Activated CD8-positive, alpha-beta T cell treated with anti-CD3 and anti-CD28 coated beads, Interleukin-2, amount 10 ng/mL, durations not matched to agents 7 days and 5 days (primary cell): ENCODE measurements at regions of chr21 and their contacts with region 1.

Region 1: GRCh38 chr21:28745131-28746016 is 247.3 kb downstream of the LTN1 start:
- DNase-seq: peak; percentile 82
- ATAC-seq: peak; percentile 86
- H3K4me3 Mint-ChIP-seq: no peak overlapping the region
- H3K27ac Mint-ChIP-seq: no peak overlapping the region
- H3K4me1 Mint-ChIP-seq: no peaks in the 10 kb centered on the region
- H3K27me3 Mint-ChIP-seq: no peaks in the 10 kb centered on the region

Region 2: GRCh38 chr21:26850108-26850643 is 1895.2 kb before region 1 on chr21:
- CTCF ChIA-PET with region 1: interaction called, 10 read pairs
- POLR2A ChIA-PET with region 1: no interaction called
- DNase-seq: no peak
- ATAC-seq: no peak
- H3K4me3 Mint-ChIP-seq: no peak overlapping the region
- H3K27ac Mint-ChIP-seq: no peak overlapping the region
- H3K4me1 Mint-ChIP-seq: peaks cover 18% of the 10 kb centered on the region
- H3K27me3 Mint-ChIP-seq: peaks cover 32% of the 10 kb centered on the region

Region 3: DNA sequence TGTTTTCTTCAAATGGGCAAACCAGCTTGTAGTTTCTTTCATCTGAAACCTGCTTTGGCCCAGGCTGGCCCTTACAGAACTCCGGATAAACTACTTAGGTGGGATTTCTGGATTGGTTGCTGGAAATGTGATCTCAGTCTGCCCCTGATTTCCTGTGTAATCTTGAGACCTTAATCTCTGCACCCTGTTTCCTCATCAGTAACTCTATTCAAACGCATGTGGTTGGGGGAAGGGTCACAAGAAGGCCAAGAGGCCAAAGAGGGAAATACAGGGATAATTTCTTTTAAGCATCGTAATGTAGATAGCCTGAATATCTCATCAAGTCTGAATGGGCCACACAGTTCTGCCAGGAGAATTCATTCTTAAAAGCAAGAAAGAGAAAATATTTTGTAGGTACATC is 236.3 kb before region 1 on chr21:
- CTCF ChIA-PET with region 1: interaction called, 141 read pairs
- POLR2A ChIA-PET with region 1: no interaction called
- DNase-seq: no peak
- ATAC-seq: no peak
- H3K4me3 Mint-ChIP-seq: no peak overlapping the region
- H3K27ac Mint-ChIP-seq: no peak overlapping the region
- H3K4me1 Mint-ChIP-seq: no peaks in the 10 kb centered on the region
- H3K27me3 Mint-ChIP-seq: peaks cover 2% of the 10 kb centered on the region

Region 4: GRCh38 chr21:28522014-28522799 is 223.2 kb before region 1 on chr21:
- CTCF ChIA-PET with region 1: interaction called, 141 read pairs
- POLR2A ChIA-PET with region 1: no interaction called
- DNase-seq: no peak
- ATAC-seq: no peak
- H3K4me3 Mint-ChIP-seq: no peak overlapping the region
- H3K27ac Mint-ChIP-seq: no peak overlapping the region
- H3K4me1 Mint-ChIP-seq: no peaks in the 10 kb centered on the region
- H3K27me3 Mint-ChIP-seq: no peaks in the 10 kb centered on the region

Region 5: GRCh38 chr21:28761674-28762356 is 16.4 kb after region 1 on chr21:
- CTCF ChIA-PET with region 1: interaction called, 17 read pairs
- POLR2A ChIA-PET with region 1: no interaction called
- DNase-seq: no peak
- ATAC-seq: no peak
- H3K4me3 Mint-ChIP-seq: no peak overlapping the region
- H3K27ac Mint-ChIP-seq: no peak overlapping the region
- H3K4me1 Mint-ChIP-seq: no peaks in the 10 kb centered on the region
- H3K27me3 Mint-ChIP-seq: no peaks in the 10 kb centered on the region

Region 6: DNA sequence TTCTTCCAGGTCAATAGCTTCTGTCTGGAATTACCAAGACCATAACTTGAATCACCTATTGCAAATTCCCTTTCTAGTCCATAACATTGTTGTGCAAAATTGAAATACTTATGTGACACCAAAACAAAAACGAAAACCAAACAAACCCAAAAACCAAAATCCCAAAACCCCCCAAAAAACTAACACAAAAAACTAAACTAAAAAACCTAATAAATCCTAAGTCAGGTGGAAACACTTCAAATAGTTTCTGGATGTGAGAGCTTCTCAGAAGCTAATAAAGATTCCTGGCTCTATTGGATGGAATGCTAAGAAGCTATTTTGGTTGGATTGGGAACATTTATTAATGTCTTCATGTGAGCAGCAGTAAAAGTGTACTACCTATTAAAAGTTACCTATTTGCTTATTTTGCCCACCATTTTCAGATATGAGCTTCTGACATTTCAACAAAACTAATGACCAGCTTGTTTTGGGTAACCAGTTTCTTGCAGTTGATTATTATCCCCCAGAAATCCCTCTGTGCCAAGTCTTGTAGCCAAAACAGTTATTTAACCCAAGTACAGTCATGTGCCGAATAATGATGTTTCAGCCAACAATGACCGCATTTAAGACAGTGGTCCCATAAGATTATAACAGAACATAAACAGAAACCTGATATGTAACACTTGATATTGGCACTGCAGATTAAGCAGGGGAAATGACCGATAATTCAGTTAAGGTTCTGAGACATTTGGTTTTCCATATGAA is 170.9 kb after region 1 on chr21:
- CTCF ChIA-PET with region 1: interaction called, 12 read pairs
- POLR2A ChIA-PET with region 1: no interaction called
- DNase-seq: no peak
- ATAC-seq: no peak
- H3K4me3 Mint-ChIP-seq: no peak overlapping the region
- H3K27ac Mint-ChIP-seq: no peak overlapping the region
- H3K4me1 Mint-ChIP-seq: no peaks in the 10 kb centered on the region
- H3K27me3 Mint-ChIP-seq: peaks cover 2% of the 10 kb centered on the region

Region 7: DNA sequence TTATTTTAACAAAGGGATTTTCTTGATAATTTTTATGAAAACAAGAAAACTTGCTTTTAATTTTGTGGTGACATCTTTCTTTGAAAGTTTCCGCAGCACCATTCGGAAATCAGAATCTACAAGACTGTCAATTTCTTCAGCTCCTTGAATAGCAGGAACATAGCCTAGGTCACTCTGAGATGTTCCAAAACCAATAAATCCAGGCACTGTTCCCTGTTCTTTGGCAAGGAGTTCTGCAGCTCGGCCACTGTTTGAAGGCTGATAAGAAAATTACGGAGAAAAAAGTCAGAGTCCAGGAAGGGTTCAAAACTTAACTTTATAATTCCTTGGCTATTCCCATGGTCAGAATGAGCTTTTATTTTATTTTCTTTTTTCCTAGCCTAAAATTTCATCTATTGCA is 241.3 kb after region 1 on chr21:
- CTCF ChIA-PET with region 1: no interaction called
- POLR2A ChIA-PET with region 1: no interaction called
- DNase-seq: no peak
- ATAC-seq: no peak
- H3K4me3 Mint-ChIP-seq: no peak overlapping the region
- H3K27ac Mint-ChIP-seq: no peak overlapping the region
- H3K4me1 Mint-ChIP-seq: peaks cover 25% of the 10 kb centered on the region
- H3K27me3 Mint-ChIP-seq: no peaks in the 10 kb centered on the region